ENCODE measurements at regions of chr7 and their contacts with region 1.

Region 1: DNA sequence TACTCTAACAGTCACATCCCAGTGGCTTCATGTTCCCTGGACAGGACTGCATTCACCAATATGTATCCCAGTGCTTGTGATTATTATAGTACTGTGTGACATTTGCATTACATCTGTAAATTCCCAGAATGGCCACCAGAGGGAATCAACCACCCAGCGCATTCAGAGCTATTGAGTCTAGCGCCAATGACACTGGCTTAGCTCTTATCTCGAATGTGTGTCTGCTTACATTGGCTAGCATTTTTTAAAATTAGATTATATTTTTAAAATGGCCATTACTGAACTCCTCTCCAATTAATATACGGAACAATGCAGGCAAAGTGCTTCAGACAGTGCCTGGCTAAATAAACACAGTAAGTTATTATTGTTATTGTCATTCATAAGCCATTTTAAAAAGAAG is 36.3 kb downstream of the TRIL start:
- DNase-seq: no peak
- ATAC-seq: peak; percentile 97
- H3K4me3 ChIP-seq: no peak overlapping the region
- H3K27ac ChIP-seq: no peak overlapping the region
- H3K4me1 ChIP-seq: peaks cover 4% of the 10 kb centered on the region; the same call in 1 of the 2 replicates
- H3K27me3 ChIP-seq: peaks cover 0 to 1% of the 10 kb centered on the region in 2 experiments; a peak in 1 of 4 replicates
- CTCF ChIP-seq: peak; percentile 65 to 75 (median 72)
- EP300 ChIP-seq: no peak
- POLR2A ChIP-seq: no peak
- RAD21 ChIP-seq: peak; percentile 60

Region 2: DNA sequence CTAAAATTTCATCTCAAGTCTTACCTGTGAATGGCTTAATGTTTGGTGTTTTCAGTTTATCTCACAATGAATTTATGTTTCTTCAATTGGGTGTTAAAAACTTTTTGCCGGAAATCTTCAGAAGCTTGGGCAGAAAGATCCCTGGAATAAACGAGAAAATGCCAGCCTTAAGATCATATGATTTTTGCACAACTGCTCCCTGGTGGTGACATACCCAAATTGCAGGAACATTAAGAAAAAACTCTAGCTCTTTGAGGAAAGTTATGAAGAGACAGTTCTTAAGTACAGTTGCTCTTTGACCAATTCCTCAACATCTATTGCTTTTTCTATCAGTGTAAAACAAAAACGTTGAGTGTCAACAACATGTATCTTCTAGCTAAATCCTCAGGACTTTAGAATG is 557.7 kb before region 1 on chr7:
- CTCF ChIA-PET with region 1: interaction called, 11 read pairs
- POLR2A ChIA-PET with region 1: no interaction called
- RAD21 ChIA-PET with region 1: no interaction called
- SMC1A ChIA-PET with region 1: interaction called, 7 read pairs
- in situ Hi-C with region 1: no loop called
- intact Hi-C with region 1: no loop called
- DNase-seq: no peak
- ATAC-seq: no peak
- H3K4me3 ChIP-seq: no peak overlapping the region
- H3K27ac ChIP-seq: no peak overlapping the region
- H3K4me1 ChIP-seq: no peaks in the 10 kb centered on the region
- H3K27me3 ChIP-seq: no peaks in the 10 kb centered on the region; a peak in 1 of 4 replicates
- CTCF ChIP-seq: peak in 2 of 3 experiments; percentile 8 to 23; a peak in 2 of 6 replicates
- EP300 ChIP-seq: no peak
- POLR2A ChIP-seq: no peak
- RAD21 ChIP-seq: no peak

Region 3: DNA sequence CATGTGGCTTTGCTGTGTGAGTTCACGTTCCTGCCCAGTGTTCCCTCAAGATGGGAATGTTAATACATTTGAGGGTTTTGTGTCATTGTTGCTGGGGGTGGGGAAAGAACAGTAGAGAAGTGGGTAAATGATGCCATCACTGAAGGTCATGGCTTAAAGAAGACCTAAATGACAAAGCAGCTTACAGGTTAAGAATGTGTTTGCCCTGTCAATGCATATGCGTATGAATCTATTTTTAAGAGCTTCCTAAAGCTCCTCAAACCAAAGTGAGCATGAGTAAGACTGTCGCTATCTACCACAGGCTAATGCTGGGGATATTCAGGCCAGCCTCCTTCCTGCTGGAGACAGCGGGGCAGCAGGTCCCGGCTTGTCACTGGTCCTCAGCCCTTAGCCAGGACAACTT is 346.6 kb before region 1 on chr7:
- CTCF ChIA-PET with region 1: no interaction called
- POLR2A ChIA-PET with region 1: no interaction called
- RAD21 ChIA-PET with region 1: no interaction called
- SMC1A ChIA-PET with region 1: no interaction called
- in situ Hi-C with region 1: no loop called
- intact Hi-C with region 1: no loop called
- DNase-seq: no peak
- ATAC-seq: peak; percentile 14
- H3K4me3 ChIP-seq: no peak overlapping the region
- H3K27ac ChIP-seq: no peak overlapping the region
- H3K4me1 ChIP-seq: peaks cover 19% of the 10 kb centered on the region
- H3K27me3 ChIP-seq: no peaks in the 10 kb centered on the region
- CTCF ChIP-seq: no peak
- EP300 ChIP-seq: no peak
- POLR2A ChIP-seq: no peak
- RAD21 ChIP-seq: no peak

Region 4: GRCh38 chr7:28904578-28905048 is 17.2 kb before region 1 on chr7:
- CTCF ChIA-PET with region 1: interaction called, 18 read pairs
- POLR2A ChIA-PET with region 1: no interaction called
- RAD21 ChIA-PET with region 1: interaction called, 3 read pairs
- SMC1A ChIA-PET with region 1: interaction called, 7 read pairs
- in situ Hi-C with region 1: no loop called
- intact Hi-C with region 1: no loop called
- DNase-seq: no peak
- ATAC-seq: no peak
- H3K4me3 ChIP-seq: no peak overlapping the region
- H3K27ac ChIP-seq: no peak overlapping the region
- H3K4me1 ChIP-seq: no peaks in the 10 kb centered on the region
- H3K27me3 ChIP-seq: peaks cover 0 to 1% of the 10 kb centered on the region in 2 experiments; a peak in 3 of 4 replicates
- CTCF ChIP-seq: no peak
- EP300 ChIP-seq: no peak
- POLR2A ChIP-seq: no peak
- RAD21 ChIP-seq: no peak

Region 5: GRCh38 chr7:28939844-28940544 is 18.2 kb after region 1 on chr7:
- CTCF ChIA-PET with region 1: interaction called, 29 read pairs
- POLR2A ChIA-PET with region 1: no interaction called
- RAD21 ChIA-PET with region 1: interaction called, 3 read pairs
- SMC1A ChIA-PET with region 1: interaction called, 5 read pairs
- in situ Hi-C with region 1: no loop called
- intact Hi-C with region 1: no loop called
- DNase-seq: no peak
- ATAC-seq: no peak
- H3K4me3 ChIP-seq: no peak overlapping the region
- H3K27ac ChIP-seq: no peak overlapping the region
- H3K4me1 ChIP-seq: no peaks in the 10 kb centered on the region
- H3K27me3 ChIP-seq: peaks cover 0 to 7% of the 10 kb centered on the region in 2 experiments; a peak in 3 of 4 replicates
- CTCF ChIP-seq: no peak
- EP300 ChIP-seq: no peak
- POLR2A ChIP-seq: no peak
- RAD21 ChIP-seq: no peak

Region 6: GRCh38 chr7:29113384-29114103 is 191.7 kb after region 1 on chr7:
- CTCF ChIA-PET with region 1: interaction called, 375 read pairs
- POLR2A ChIA-PET with region 1: no interaction called
- RAD21 ChIA-PET with region 1: interaction called, 3 read pairs
- SMC1A ChIA-PET with region 1: interaction called, 10 read pairs
- in situ Hi-C with region 1: loop called (anchors 5 kb)
- intact Hi-C with region 1: no loop called
- DNase-seq: no peak
- ATAC-seq: peak; percentile 50
- H3K4me3 ChIP-seq: no peak overlapping the region
- H3K27ac ChIP-seq: no peak overlapping the region
- H3K4me1 ChIP-seq: no peaks in the 10 kb centered on the region
- H3K27me3 ChIP-seq: peaks cover 1 to 3% of the 10 kb centered on the region in 2 experiments; a peak in 2 of 4 replicates
- CTCF ChIP-seq: peak in 2 of 3 experiments; percentile 27 to 35; a peak in 2 of 6 replicates
- EP300 ChIP-seq: no peak
- POLR2A ChIP-seq: no peak
- RAD21 ChIP-seq: peak; percentile 16; the same call in 1 of the 2 replicates

Region 7: GRCh38 chr7:29408841-29409243 is 487.0 kb after region 1 on chr7:
- CTCF ChIA-PET with region 1: interaction called, 59 read pairs
- POLR2A ChIA-PET with region 1: no interaction called
- RAD21 ChIA-PET with region 1: interaction called, 24 read pairs
- SMC1A ChIA-PET with region 1: interaction called, 85 read pairs
- in situ Hi-C with region 1: loop called (anchors 5 kb)
- intact Hi-C with region 1: loop called (anchors 1 kb)
- DNase-seq: peak; percentile 21
- ATAC-seq: peak; percentile 84
- H3K4me3 ChIP-seq: no peak overlapping the region
- H3K27ac ChIP-seq: no peak overlapping the region
- H3K4me1 ChIP-seq: no peaks in the 10 kb centered on the region
- H3K27me3 ChIP-seq: no peaks in the 10 kb centered on the region; a peak in 1 of 4 replicates
- CTCF ChIP-seq: peak; percentile 67 to 85 (median 83)
- EP300 ChIP-seq: no peak
- POLR2A ChIP-seq: no peak
- RAD21 ChIP-seq: peak; percentile 87